ENCODE measurements at regions of chr2 and their contacts with region 1.

Region 1: DNA sequence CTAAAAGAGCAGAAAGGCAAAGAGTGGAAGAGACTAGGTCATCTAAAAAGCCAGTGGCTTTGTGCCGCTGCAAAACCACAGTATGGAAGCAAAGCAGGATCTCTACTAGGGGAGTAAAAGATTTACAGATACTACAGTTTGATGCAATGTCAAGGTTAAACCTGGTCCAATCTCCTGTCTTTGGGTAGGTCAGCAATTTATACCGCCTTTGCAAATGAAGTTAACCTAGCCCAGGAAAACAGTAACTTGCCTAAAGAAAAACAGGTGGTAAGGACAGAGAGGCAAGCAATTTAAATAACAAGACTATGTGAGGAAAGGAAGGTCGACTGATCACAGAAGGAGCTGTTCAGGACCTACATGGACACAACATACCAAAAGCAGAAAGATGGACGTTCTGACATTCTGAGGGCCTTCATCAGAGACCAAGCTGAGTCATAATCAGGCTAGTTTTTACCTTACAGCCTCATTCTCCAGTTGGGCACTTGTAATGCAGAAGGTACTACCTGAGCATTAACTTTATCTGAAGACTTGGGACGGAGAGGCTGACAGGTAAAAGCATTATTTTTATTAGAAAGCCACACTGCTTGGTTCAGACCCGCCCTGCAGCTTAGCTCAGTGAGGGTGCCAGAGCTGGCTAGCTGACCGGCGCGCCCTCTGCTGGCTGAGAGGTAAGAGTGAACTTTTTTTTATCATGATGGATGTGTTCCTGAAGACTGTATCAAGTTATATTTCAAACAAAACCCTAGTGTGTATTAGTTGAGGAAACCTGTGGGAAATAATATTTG is 15.9 kb downstream of the CDKL4 start:
- DNase-seq: peak in 1 of 2 experiments; percentile 80
- H3K4me3 ChIP-seq: peak overlapping the region in 2 of 4 experiments; percentile 36 to 58; a peak in 3 of 8 replicates
- H3K27ac ChIP-seq: no peak overlapping the region
- H3K4me1 ChIP-seq: peaks cover 0 to 5% (median 3%) of the 10 kb centered on the region in 4 experiments; a peak in 4 of 7 replicates
- H3K27me3 ChIP-seq: no peaks in the 10 kb centered on the region
- CTCF ChIP-seq: peak; percentile 79 to 82 (median 80)
- EP300 ChIP-seq: no peak
- POLR2A ChIP-seq: no peak
- RAD21 ChIP-seq: peak; percentile 84 to 89

Region 2: DNA sequence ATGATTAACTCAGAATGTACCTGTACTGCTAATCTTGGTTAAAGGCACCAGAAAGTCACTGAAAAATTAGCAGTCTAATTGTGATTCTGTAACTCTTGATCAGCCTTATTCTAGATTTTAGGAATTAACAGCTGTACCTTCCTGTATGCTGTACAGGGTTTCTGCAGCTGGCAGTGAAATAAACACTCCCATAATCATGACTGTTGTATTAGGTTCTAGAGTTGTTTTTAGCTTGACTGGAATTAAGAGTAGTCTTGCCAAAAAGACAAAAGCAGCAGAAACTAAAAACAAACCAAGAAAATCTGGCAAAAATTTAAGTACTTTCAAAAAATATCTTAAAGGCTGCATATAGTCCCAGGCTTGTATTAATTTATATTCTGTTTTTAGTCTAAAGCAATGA is 210.5 kb before region 1 on chr2:
- CTCF ChIA-PET with region 1: no interaction called
- POLR2A ChIA-PET with region 1: no interaction called
- DNase-seq: no peak
- H3K4me3 ChIP-seq: no peak overlapping the region
- H3K27ac ChIP-seq: no peak overlapping the region
- H3K4me1 ChIP-seq: peaks cover 0 to 4% (median under 1%) of the 10 kb centered on the region in 4 experiments; a peak in 2 of 7 replicates
- H3K27me3 ChIP-seq: no peaks in the 10 kb centered on the region
- CTCF ChIP-seq: no peak
- EP300 ChIP-seq: no peak
- POLR2A ChIP-seq: no peak
- RAD21 ChIP-seq: no peak

Region 3: GRCh38 chr2:39059366-39059952 is 168.4 kb before region 1 on chr2:
- CTCF ChIA-PET with region 1: interaction called, 196 read pairs
- POLR2A ChIA-PET with region 1: interaction called, 3 read pairs
- DNase-seq: no peak
- H3K4me3 ChIP-seq: no peak overlapping the region
- H3K27ac ChIP-seq: no peak overlapping the region
- H3K4me1 ChIP-seq: no peaks in the 10 kb centered on the region; a peak in 2 of 7 replicates
- H3K27me3 ChIP-seq: no peaks in the 10 kb centered on the region
- CTCF ChIP-seq: peak in 2 of 3 experiments; percentile 27 to 43; a peak in 2 of 4 replicates
- EP300 ChIP-seq: no peak
- POLR2A ChIP-seq: no peak
- RAD21 ChIP-seq: peak in 1 of 2 experiments; percentile 70

Region 4: DNA sequence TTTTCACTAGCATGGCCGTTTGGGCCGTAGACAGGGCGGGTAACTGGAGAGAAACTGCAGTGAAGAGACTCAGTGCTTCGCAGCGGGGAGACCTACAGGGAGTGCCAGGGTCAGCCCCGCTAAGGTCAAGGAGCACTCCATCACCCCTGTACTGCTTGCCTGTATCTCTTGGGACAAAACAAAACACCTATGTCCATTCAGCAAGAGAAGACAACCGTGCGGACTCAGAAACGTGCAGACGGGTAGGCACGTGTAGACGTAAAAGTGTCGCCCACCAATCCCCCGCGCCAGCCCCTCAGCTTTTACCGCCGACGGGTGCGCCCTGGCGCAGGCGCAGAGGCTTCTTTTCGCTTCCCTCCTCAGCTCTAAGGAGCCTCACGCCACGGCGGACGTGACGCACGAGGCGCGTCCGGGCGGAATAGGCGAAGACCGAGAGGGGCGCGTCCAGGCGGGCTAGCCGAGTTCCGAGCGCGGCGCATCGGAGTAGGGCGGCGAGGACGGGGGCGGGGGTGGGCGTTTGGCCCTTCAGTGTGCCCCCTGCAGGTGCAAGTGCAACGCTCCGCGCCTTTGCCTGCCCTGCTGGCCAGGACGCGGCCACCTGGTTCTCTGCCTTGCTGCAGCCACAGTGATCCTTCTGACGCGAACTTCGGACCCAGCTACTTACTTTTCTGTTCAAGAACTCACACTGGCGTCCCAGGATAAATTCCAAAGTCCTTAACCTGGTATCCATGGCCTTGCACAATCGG is 103.6 kb before region 1 on chr2:
- CTCF ChIA-PET with region 1: interaction called, 35 read pairs
- POLR2A ChIA-PET with region 1: interaction called, 9 read pairs
- DNase-seq: peak; percentile 97 to 98
- H3K4me3 ChIP-seq: peak overlapping the region; percentile 67 to 85 (median 77)
- H3K27ac ChIP-seq: peak overlapping the region; percentile 98
- H3K4me1 ChIP-seq: peaks cover 5 to 9% (median 7%) of the 10 kb centered on the region in 4 experiments; a peak in 6 of 7 replicates
- H3K27me3 ChIP-seq: no peaks in the 10 kb centered on the region
- CTCF ChIP-seq: peak; percentile 72 to 81 (median 74)
- EP300 ChIP-seq: peak in 1 of 2 experiments; percentile 77; a peak in 1 of 3 replicates
- POLR2A ChIP-seq: peak; percentile 89 to 95
- RAD21 ChIP-seq: peak; percentile 39 to 49; a peak in 3 of 4 replicates

Region 5: GRCh38 chr2:39210846-39211245 is 17.0 kb before region 1 on chr2:
- CTCF ChIA-PET with region 1: interaction called, 38 read pairs
- POLR2A ChIA-PET with region 1: interaction called, 3 read pairs
- DNase-seq: no peak
- H3K4me3 ChIP-seq: no peak overlapping the region
- H3K27ac ChIP-seq: no peak overlapping the region
- H3K4me1 ChIP-seq: no peaks in the 10 kb centered on the region
- H3K27me3 ChIP-seq: no peaks in the 10 kb centered on the region
- CTCF ChIP-seq: no peak
- EP300 ChIP-seq: no peak
- POLR2A ChIP-seq: no peak
- RAD21 ChIP-seq: no peak